ENCODE measurements at regions of chr2 and their contacts with region 1.

Region 1: GRCh38 chr2:152025678-152026287 is 73.1 kb downstream of the CACNB4 start:
- DNase-seq: peak; percentile 42 to 86 (median 69)
- ATAC-seq: peak; percentile 87 to 96 (median 94)
- H3K4me3 ChIP-seq: peak overlapping the region; percentile 38 to 42
- H3K4me3 Mint-ChIP-seq: peak overlapping the region; percentile 67 to 82 (median 74)
- H3K27ac ChIP-seq: no peak overlapping the region
- H3K27ac Mint-ChIP-seq: peak overlapping the region in 1 of 2 donors; percentile 45
- H3K4me1 ChIP-seq: peaks cover 0 to 3% of the 10 kb centered on the region in 2 experiments
- H3K4me1 Mint-ChIP-seq: peaks cover 4 to 12% (median 6%) of the 10 kb centered on the region in 3 donors
- H3K27me3 ChIP-seq: peaks cover 0 to 4% of the 10 kb centered on the region in 2 experiments
- H3K27me3 Mint-ChIP-seq: peaks cover 11 to 13% of the 10 kb centered on the region in 2 donors

Region 2: GRCh38 chr2:151999053-151999452 is 26.7 kb before region 1 on chr2:
- CTCF ChIA-PET with region 1: interaction called, 5 to 11 read pairs
- POLR2A ChIA-PET with region 1: no interaction called
- DNase-seq: peak in 26 of 35 experiments; percentile 1 to 64 (median 18)
- ATAC-seq: peak in 2 of 4 experiments; percentile 45 to 46
- H3K4me3 ChIP-seq: no peak overlapping the region
- H3K4me3 Mint-ChIP-seq: no peak overlapping the region
- H3K27ac ChIP-seq: no peak overlapping the region
- H3K27ac Mint-ChIP-seq: no peak overlapping the region
- H3K4me1 ChIP-seq: no peaks in the 10 kb centered on the region
- H3K4me1 Mint-ChIP-seq: peaks cover under 1 to 1% (median under 1%) of the 10 kb centered on the region in 3 donors
- H3K27me3 ChIP-seq: peaks cover 0 to 3% of the 10 kb centered on the region in 2 experiments
- H3K27me3 Mint-ChIP-seq: no peaks in the 10 kb centered on the region

Region 3: DNA sequence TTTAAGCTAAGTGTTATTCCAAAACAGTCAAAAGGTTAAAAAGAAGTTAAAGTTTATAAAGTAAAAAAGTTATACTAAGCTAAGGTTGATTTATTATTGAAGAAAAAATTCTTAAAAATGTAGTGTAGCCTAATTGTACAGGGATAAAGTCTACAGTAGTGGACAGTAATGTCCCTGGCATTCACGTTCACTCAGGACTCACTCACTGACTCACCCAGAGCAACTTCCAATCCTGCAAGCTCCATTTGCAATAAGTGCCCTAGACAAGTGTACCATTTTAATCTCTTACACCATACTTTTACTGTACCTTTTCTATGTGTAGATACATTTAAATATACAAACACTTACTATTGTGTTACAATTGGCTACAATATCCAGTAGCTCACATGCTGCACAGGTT is 13.1 kb before region 1 on chr2:
- CTCF ChIA-PET with region 1: interaction called, 4 to 10 read pairs
- POLR2A ChIA-PET with region 1: no interaction called
- DNase-seq: no peak
- ATAC-seq: no peak
- H3K4me3 ChIP-seq: no peak overlapping the region
- H3K4me3 Mint-ChIP-seq: no peak overlapping the region
- H3K27ac ChIP-seq: no peak overlapping the region
- H3K27ac Mint-ChIP-seq: no peak overlapping the region
- H3K4me1 ChIP-seq: no peaks in the 10 kb centered on the region
- H3K4me1 Mint-ChIP-seq: no peaks in the 10 kb centered on the region
- H3K27me3 ChIP-seq: peaks cover 0 to 7% of the 10 kb centered on the region in 2 experiments
- H3K27me3 Mint-ChIP-seq: peaks cover 10 to 21% of the 10 kb centered on the region in 2 donors

Region 4: DNA sequence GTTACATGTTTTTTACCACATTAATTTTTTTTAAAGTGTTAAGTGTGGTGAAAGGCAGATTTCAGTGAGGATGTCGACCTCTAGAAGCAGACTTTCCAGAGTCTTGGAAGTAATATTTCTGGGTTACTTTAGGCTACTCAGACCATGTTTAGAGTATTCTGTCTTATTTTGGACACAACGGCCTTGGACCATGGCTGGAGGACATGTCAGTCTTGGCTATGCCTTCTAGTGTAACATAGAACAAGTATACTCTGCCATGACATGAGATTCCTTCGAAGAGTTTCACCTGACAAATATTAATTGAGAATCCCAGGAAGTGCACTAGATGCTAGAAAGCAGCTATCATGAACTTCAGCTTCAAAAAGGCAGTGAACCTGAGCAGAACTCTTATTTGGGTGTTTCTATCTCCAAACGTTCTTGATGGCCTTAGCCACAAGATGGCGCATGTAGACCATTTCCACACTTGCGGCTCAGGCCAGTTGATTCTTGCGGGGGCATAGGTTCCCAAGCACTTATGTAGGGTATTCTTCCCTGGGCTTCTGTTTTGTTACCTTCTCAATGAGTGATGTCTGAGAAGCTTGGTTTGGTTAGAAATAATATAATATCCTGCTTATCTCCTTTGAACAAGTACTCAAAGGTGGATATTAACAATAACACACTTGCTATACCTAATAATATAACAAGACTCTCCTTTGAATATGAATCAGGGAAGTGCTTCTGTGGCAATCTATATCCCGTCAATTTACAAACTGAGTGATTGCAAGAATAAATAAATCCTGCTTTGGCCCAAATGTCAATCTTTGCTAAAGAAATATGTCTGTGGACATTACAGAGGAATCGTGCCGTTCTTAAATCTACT is 11.1 kb after region 1 on chr2:
- CTCF ChIA-PET with region 1: interaction called, 4 to 24 read pairs
- POLR2A ChIA-PET with region 1: no interaction called
- DNase-seq: peak in 31 of 35 experiments; percentile 2 to 69 (median 28)
- ATAC-seq: peak in 2 of 4 experiments; percentile 40 to 55
- H3K4me3 ChIP-seq: no peak overlapping the region
- H3K4me3 Mint-ChIP-seq: no peak overlapping the region
- H3K27ac ChIP-seq: no peak overlapping the region
- H3K27ac Mint-ChIP-seq: no peak overlapping the region
- H3K4me1 ChIP-seq: no peaks in the 10 kb centered on the region
- H3K4me1 Mint-ChIP-seq: no peaks in the 10 kb centered on the region
- H3K27me3 ChIP-seq: no peaks in the 10 kb centered on the region
- H3K27me3 Mint-ChIP-seq: peaks cover 0 to 3% of the 10 kb centered on the region in 2 donors

Region 5: DNA sequence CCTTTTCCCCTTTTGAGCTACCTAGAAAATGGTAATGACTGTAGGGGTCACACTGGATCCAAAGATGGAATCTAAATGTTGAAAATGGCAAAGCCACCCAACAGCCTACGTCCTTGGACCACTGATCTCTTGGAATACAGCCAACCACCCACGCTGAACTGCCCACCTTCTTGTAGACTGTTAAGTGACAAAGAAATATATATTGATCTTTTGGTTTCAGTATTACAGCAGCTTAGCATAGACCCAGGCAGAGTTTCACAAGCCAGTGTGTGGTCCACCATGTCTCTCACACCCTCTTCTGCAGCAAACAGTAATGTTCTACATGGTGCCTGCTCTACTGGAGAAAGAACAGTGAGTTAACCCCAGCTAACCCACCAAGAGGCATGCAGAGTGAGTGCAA is 52.9 kb after region 1 on chr2:
- CTCF ChIA-PET with region 1: no interaction called
- POLR2A ChIA-PET with region 1: no interaction called
- DNase-seq: no peak
- ATAC-seq: no peak
- H3K4me3 ChIP-seq: no peak overlapping the region
- H3K4me3 Mint-ChIP-seq: no peak overlapping the region
- H3K27ac ChIP-seq: no peak overlapping the region
- H3K27ac Mint-ChIP-seq: no peak overlapping the region
- H3K4me1 ChIP-seq: no peaks in the 10 kb centered on the region
- H3K4me1 Mint-ChIP-seq: no peaks in the 10 kb centered on the region
- H3K27me3 ChIP-seq: peaks cover 0 to 2% of the 10 kb centered on the region in 2 experiments
- H3K27me3 Mint-ChIP-seq: no peaks in the 10 kb centered on the region

Measured in T-cell (primary cell).